ENCODE measurements at regions of chr1 and their contacts with region 1.

Region 1: GRCh38 chr1:39973503-39974135 is 18.7 kb downstream of the MFSD2A start:
- DNase-seq: peak; percentile 75

Region 2: DNA sequence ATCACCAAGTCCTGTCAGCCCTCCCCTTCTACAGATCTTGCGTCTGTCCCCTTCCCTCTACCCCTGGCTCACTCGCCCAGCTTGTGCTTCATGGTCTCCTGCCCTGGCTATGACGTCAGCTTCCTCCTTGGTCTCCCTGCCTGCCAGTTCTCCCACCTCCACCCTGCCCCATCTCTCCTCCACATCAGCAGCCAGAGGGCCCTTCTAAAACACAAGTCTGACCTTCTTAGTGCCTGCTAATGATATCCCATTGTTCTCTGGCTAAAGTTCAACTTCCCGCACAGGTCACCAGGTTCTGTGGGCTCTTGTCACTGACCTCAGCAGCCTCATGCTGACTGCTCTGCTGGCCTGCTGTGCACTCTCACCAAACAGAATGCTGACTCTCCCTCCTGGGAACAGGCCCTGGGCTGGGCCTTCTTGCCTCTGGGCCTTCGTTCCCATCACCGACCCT is 47.3 kb before region 1 on chr1:
- in situ Hi-C with region 1: loop called (anchors 10 kb)
- DNase-seq: peak; percentile 65

Region 3: GRCh38 chr1:40315239-40315794 is 341.7 kb after region 1 on chr1:
- in situ Hi-C with region 1: no loop called
- DNase-seq: peak; percentile 96

Measured in KBM-7 (cell line).